WTC11 (cell line): ENCODE measurements at regions of chr3 and their contacts with region 1.

Region 1: GRCh38 chr3:48157950-48158376 is 30.3 kb downstream of the CDC25A start:
- DNase-seq: peak; percentile 82
- ATAC-seq: peak; percentile 69
- H3K4me3 Mint-ChIP-seq: no peak overlapping the region
- H3K27ac Mint-ChIP-seq: peak overlapping the region; percentile 34; the same call in 1 of the 2 replicates
- H3K4me1 Mint-ChIP-seq: peaks cover 8% of the 10 kb centered on the region
- H3K27me3 Mint-ChIP-seq: no peaks in the 10 kb centered on the region
- CTCF ChIP-seq: peak; percentile 78

Region 2: GRCh38 chr3:47849699-47850563 is 308.0 kb before region 1 on chr3:
- CTCF ChIA-PET with region 1: interaction called, 45 read pairs
- POLR2A ChIA-PET with region 1: no interaction called
- DNase-seq: no peak
- ATAC-seq: peak; percentile 25
- H3K4me3 Mint-ChIP-seq: no peak overlapping the region
- H3K27ac Mint-ChIP-seq: peak overlapping the region; percentile 64
- H3K4me1 Mint-ChIP-seq: no peaks in the 10 kb centered on the region
- H3K27me3 Mint-ChIP-seq: no peaks in the 10 kb centered on the region
- CTCF ChIP-seq: peak; percentile 29; the same call in 1 of the 2 replicates

Region 3: GRCh38 chr3:47890828-47891612 is 266.9 kb before region 1 on chr3:
- CTCF ChIA-PET with region 1: interaction called, 10 read pairs
- POLR2A ChIA-PET with region 1: no interaction called
- DNase-seq: no peak
- ATAC-seq: peak; percentile 20; the same call in 1 of the 2 replicates
- H3K4me3 Mint-ChIP-seq: no peak overlapping the region
- H3K27ac Mint-ChIP-seq: peak overlapping the region; percentile 76
- H3K4me1 Mint-ChIP-seq: peaks cover 50% of the 10 kb centered on the region
- H3K27me3 Mint-ChIP-seq: no peaks in the 10 kb centered on the region
- CTCF ChIP-seq: no peak